Common myeloid progenitor, CD34-positive (primary cell): ENCODE measurements at regions of chr1 and their contacts with region 1.

Region 1: DNA sequence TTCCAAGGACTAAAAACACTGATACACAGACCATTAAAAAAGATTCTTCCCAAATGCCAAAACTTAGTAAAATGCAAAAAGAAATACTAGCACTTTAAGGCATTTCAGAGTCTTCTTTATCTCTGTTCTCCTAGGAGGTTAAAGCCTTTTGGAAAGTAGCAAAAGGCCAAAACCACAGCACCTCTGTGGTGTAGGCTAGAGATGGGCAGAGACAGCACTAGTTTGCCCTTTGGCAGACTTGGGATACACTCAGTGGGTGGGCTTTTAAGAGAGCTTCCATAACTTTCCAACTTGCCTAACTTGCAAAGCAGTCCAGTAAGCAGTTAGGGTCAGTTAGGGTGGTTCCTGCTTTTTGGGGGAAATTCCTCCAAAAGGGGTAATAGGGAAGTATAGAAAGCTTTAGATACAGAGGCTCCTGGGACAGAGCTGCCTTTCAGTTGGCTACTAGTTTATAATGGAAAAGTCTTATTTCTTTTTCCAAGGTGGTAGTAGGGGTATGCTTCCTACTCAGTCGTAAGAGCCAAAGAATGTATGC is 17.9 kb upstream of the PTCH2 start:
- DNase-seq: no peak
- H3K4me3 ChIP-seq: no peak overlapping the region
- H3K27ac ChIP-seq: no peak overlapping the region
- H3K4me1 ChIP-seq: peaks cover 0 to 16% (median 1%) of the 10 kb centered on the region in 4 experiments
- H3K27me3 ChIP-seq: no peaks in the 10 kb centered on the region

Region 2: GRCh38 chr1:44835738-44836675 is 25.0 kb before region 1 on chr1:
- CTCF ChIA-PET with region 1: no interaction called
- POLR2A ChIA-PET with region 1: no interaction called
- DNase-seq: peak; percentile 86 to 94 (median 89)
- H3K4me3 ChIP-seq: peak overlapping the region in 1 of 7 experiments; percentile 51
- H3K27ac ChIP-seq: no peak overlapping the region
- H3K4me1 ChIP-seq: peaks cover 0 to 54% (median 51%) of the 10 kb centered on the region in 4 experiments
- H3K27me3 ChIP-seq: no peaks in the 10 kb centered on the region

Region 3: DNA sequence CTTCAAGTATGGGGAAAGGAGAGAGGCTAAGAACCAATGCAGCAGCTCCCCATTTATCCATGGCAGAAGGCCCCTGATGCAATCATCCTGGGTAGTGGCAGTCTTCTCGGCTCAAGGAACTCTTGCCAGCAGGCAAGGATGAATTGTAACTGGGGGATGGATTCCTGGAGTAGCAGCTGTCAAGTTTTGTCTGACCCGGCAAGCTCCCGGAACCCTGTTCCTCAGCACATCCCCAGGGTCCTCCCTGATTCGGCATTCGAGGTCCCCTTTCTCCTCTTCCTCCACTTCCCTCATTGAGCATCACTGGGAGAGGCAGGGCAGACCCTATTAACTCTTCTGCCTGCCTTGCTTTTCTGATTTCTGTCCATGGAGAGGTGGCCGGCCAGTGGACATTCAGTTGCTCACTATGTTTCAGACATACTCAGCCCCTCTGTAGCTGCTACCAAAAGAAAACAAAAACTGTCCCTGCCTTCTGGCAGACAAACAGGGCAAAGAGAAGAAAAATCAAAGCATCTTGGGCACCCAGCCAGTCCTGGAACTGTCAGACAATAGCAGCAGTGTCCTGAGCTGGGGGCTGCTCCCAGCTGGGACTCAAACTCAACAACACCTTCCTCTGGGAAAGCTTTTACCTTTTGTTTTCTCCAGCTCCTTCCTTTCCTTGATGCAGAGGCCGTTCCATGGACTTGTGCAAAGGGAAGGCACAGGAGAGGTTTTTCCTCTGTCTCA is 12.3 kb before region 1 on chr1:
- CTCF ChIA-PET with region 1: interaction called, 10 read pairs
- POLR2A ChIA-PET with region 1: no interaction called
- DNase-seq: no peak
- H3K4me3 ChIP-seq: no peak overlapping the region
- H3K27ac ChIP-seq: no peak overlapping the region
- H3K4me1 ChIP-seq: no peaks in the 10 kb centered on the region
- H3K27me3 ChIP-seq: no peaks in the 10 kb centered on the region

Region 4: GRCh38 chr1:44894591-44894990 is 33.6 kb after region 1 on chr1:
- CTCF ChIA-PET with region 1: no interaction called
- POLR2A ChIA-PET with region 1: no interaction called
- DNase-seq: no peak
- H3K4me3 ChIP-seq: no peak overlapping the region
- H3K27ac ChIP-seq: no peak overlapping the region
- H3K4me1 ChIP-seq: no peaks in the 10 kb centered on the region
- H3K27me3 ChIP-seq: no peaks in the 10 kb centered on the region